HepG2 (cell line): ENCODE measurements at regions of chr22 and their contacts with region 1.

Region 1: GRCh38 chr22:31148953-31149627 is 8.8 kb upstream of the PLA2G3 start:
- DNase-seq: peak; percentile 64
- ATAC-seq: peak; percentile 90
- H3K4me3 ChIP-seq: no peak overlapping the region
- H3K27ac ChIP-seq: no peak overlapping the region
- H3K4me1 ChIP-seq: peaks cover 27% of the 10 kb centered on the region
- H3K27me3 ChIP-seq: peaks cover 2 to 5% of the 10 kb centered on the region in 2 experiments; a peak in 2 of 5 replicates
- CTCF ChIP-seq: peak; percentile 96
- EP300 ChIP-seq: no peak
- POLR2A ChIP-seq: no peak
- RAD21 ChIP-seq: peak; percentile 95

Region 2: GRCh38 chr22:30947816-30948454 is 201.2 kb before region 1 on chr22:
- CTCF ChIA-PET with region 1: interaction called, 14 read pairs
- POLR2A ChIA-PET with region 1: no interaction called
- in situ Hi-C with region 1: no loop called
- intact Hi-C with region 1: loop called (anchors 1 kb)
- DNase-seq: peak; percentile 26
- ATAC-seq: no peak
- H3K4me3 ChIP-seq: no peak overlapping the region
- H3K27ac ChIP-seq: no peak overlapping the region
- H3K4me1 ChIP-seq: no peaks in the 10 kb centered on the region
- H3K27me3 ChIP-seq: no peaks in the 10 kb centered on the region
- CTCF ChIP-seq: peak; percentile 47
- EP300 ChIP-seq: no peak
- POLR2A ChIP-seq: no peak
- RAD21 ChIP-seq: 0 out of 2 replicates have a peak, but pooled peaks have one; percentile 42

Region 3: GRCh38 chr22:31089160-31090100 is 59.7 kb before region 1 on chr22:
- CTCF ChIA-PET with region 1: interaction called, 32 read pairs
- POLR2A ChIA-PET with region 1: no interaction called
- in situ Hi-C with region 1: no loop called
- intact Hi-C with region 1: loop called (anchors 1 kb)
- DNase-seq: no peak
- ATAC-seq: peak; percentile 69
- H3K4me3 ChIP-seq: no peak overlapping the region
- H3K27ac ChIP-seq: no peak overlapping the region
- H3K4me1 ChIP-seq: no peaks in the 10 kb centered on the region
- H3K27me3 ChIP-seq: no peaks in the 10 kb centered on the region
- CTCF ChIP-seq: peak; percentile 89
- EP300 ChIP-seq: no peak
- POLR2A ChIP-seq: no peak
- RAD21 ChIP-seq: peak; percentile 89

Region 4: DNA sequence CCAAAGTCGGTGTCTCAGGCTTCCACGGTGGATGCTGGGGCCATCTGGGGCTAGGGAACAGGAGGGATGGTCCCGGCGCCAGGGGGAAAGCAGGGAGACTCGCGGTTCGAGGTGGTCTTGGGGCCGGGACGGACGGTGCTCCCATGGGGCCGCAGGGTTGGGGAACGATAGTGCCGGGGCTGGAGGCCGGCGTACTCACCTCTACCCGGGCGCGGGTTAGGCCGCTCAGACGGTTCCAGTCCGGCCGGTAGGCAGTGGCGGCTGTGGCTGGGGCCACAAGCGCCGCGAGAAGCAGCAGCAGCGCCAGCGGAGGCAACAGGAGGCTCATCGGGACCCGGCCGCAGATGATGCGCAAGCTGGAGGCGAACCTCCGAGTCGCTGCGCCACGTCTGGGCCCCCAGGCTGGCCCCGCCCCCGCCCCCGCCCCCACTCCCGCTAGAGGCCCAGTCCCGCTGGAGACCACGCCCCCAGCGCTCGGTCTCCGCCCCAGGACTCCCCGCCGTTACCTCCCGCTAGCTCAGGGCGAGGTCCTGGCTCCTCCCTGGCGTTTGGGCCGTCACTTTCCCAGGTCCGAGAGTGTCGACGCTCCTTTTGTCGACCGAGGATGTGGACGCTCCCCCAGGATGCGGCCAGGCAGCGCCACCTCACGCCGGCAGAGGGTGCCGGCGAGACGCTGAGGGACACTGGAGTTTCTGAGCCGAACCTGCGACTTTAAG is 41.8 kb before region 1 on chr22 and contains the start of gene SELENOM:
- CTCF ChIA-PET with region 1: interaction called, 17 read pairs
- POLR2A ChIA-PET with region 1: no interaction called
- in situ Hi-C with region 1: loop called (anchors 5 kb)
- intact Hi-C with region 1: loop called (anchors 1 kb)
- DNase-seq: peak; percentile 86
- ATAC-seq: peak; percentile 90
- H3K4me3 ChIP-seq: peak within 1 kb of the TSS; percentile 39 to 64 (median 44); a peak in 5 of 6 replicates
- H3K27ac ChIP-seq: no peak within 1 kb of the TSS
- H3K4me1 ChIP-seq: peaks cover 28% of the 10 kb centered on the region
- H3K27me3 ChIP-seq: no peaks in the 10 kb centered on the region
- CTCF ChIP-seq: peak; percentile 95
- EP300 ChIP-seq: no peak
- POLR2A ChIP-seq: no peak
- RAD21 ChIP-seq: peak; percentile 90
- total RNA-seq, gene SELENOM: 2.4 and 4.1 TPM in 2 replicates

Region 5: GRCh38 chr22:31313366-31314147 is 164.5 kb after region 1 on chr22:
- CTCF ChIA-PET with region 1: no interaction called
- POLR2A ChIA-PET with region 1: no interaction called
- in situ Hi-C with region 1: no loop called
- intact Hi-C with region 1: no loop called
- DNase-seq: peak; percentile 46
- ATAC-seq: peak; percentile 95
- H3K4me3 ChIP-seq: 0 out of 6 replicates have a peak overlapping the region, but pooled peaks of 1 of the 3 experiments have one; percentile 21
- H3K27ac ChIP-seq: no peak overlapping the region
- H3K4me1 ChIP-seq: peaks cover 9% of the 10 kb centered on the region; the same call in 1 of the 2 replicates
- H3K27me3 ChIP-seq: no peaks in the 10 kb centered on the region
- CTCF ChIP-seq: peak; percentile 78
- EP300 ChIP-seq: no peak
- POLR2A ChIP-seq: no peak
- RAD21 ChIP-seq: peak; percentile 28; the same call in 1 of the 2 replicates